ENCODE measurements at regions of chr7 and their contacts with region 1.

Region 1: DNA sequence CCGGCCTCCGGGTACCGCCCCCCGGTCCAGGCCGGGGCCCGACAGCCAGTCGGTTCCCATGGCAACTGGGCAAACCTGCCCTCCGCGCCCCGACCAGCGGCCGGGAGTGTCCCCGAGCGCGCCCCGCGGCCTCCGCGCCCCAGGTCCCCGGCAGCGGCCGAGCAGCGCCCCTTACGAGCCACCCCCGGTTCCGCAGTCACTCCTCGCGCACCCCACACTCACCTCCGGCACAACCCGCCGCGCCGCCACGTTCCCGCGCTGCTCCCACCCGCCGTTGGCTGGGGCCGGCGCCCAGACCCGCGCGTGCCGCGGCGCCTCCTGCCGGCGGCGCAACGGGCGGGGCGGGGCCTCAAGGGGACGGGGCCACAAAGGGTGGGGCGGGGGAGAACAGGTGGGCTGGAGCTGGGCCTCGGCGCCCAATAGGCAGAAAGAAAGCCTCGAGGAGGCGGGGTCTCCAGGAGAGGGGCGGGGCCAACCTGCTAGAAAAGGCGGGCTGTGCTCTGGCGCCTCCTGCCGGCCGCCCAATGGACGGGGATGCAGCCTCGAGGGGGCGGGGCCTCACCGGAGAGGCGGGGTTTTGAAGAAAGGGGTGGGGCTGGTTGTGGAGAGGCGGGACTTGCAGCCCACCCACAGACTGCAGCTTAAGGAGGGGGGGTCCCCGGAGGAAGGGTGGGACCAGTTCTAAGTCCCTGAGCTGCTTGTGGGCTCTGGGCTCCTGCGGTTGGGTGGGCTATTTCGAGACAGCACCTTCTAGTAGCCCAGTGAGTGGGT is at the start of gene RADIL:
- DNase-seq: peak; percentile 93 to 95
- H3K4me3 ChIP-seq: peak within 1 kb of the TSS; percentile 61 to 88
- H3K27ac ChIP-seq: peak within 1 kb of the TSS; percentile 70 to 75
- H3K4me1 ChIP-seq: peaks cover 0 to 26% (median 14%) of the 10 kb centered on the region in 4 donors
- H3K27me3 ChIP-seq: no peaks in the 10 kb centered on the region
- CTCF ChIP-seq: peak; percentile 77 to 88

Region 2: DNA sequence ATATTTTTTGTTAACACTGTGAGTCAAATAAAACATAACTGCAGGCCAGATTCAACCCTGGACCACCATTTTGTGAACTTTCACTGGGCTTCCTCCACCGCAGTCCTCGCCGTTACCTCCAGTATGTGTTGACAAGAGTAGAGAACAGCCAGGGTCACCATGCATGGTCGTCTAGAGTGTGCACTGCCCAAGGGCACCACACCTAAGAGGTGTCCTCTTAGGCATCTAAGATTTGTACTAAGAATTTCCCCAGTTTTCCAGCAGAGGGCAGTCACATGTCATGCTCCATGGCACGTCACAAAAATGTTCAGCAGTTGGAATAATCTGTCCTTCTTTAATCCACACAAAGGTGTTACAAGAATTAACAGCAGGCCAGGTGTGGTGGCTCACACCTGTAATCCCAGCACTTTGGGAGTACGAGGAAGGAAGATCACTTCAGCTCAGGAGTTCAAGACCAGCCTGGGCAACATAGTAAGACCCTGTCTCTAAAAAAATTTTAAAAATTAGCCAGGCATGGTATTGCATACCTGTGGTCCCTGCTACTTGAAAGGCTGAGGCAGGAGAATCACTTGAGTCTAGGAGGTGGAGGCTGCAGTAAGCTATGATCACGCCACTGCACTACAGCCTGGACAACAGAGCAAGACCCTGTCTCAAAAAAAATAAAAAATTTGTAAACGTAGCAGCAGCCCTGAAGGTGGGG is 272.6 kb before region 1 on chr7:
- intact Hi-C with region 1: no loop called
- DNase-seq: peak in 1 of 2 donors; percentile 32
- H3K4me3 ChIP-seq: no peak overlapping the region
- H3K27ac ChIP-seq: no peak overlapping the region
- H3K4me1 ChIP-seq: peaks cover 0 to 19% (median 9%) of the 10 kb centered on the region in 4 donors
- H3K27me3 ChIP-seq: no peaks in the 10 kb centered on the region
- CTCF ChIP-seq: peak; percentile 85 to 88

Region 3: GRCh38 chr7:4797858-4798705 is 85.5 kb before region 1 on chr7:
- intact Hi-C with region 1: loop called (anchors 5 kb)
- DNase-seq: no peak
- H3K4me3 ChIP-seq: no peak overlapping the region
- H3K27ac ChIP-seq: no peak overlapping the region
- H3K4me1 ChIP-seq: no peaks in the 10 kb centered on the region
- H3K27me3 ChIP-seq: no peaks in the 10 kb centered on the region
- CTCF ChIP-seq: peak; percentile 85 to 88

Region 4: DNA sequence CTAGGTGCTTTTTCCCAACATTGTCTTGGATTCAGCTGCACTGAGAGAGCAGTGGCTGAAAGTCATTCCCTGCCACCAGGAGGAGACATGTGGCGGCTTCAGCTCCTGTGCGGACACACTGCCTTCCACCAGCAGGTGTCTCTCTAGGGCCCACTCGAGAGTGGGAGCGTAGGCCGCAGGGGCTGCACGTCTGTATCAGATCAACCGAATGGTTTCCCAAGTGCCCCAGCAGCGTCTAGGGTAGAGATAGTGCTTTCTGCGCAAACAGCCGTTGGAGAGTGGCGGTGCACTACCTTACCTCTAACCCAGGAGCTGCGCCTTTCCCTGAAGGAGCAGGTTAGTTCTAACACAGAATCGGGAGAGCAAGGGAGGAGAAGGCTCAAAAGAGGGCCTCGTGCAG is 53.4 kb before region 1 on chr7:
- intact Hi-C with region 1: loop called (anchors 5 kb)
- DNase-seq: peak in 1 of 2 donors; percentile 51
- H3K4me3 ChIP-seq: no peak overlapping the region
- H3K27ac ChIP-seq: no peak overlapping the region
- H3K4me1 ChIP-seq: no peaks in the 10 kb centered on the region
- H3K27me3 ChIP-seq: no peaks in the 10 kb centered on the region
- CTCF ChIP-seq: peak; percentile 62 to 79

Measured in tibial artery (tissue), 4 donors.